Activated CD4-positive, alpha-beta T cell treated with anti-CD3 and anti-CD28 coated beads, Interleukin-2, amount 10 ng/mL, durations not matched to agents 24 days and 14 days (primary cell): ENCODE measurements at regions of chr2 and their contacts with region 1.

Region 1: GRCh38 chr2:64330281-64331113 is 123.5 kb upstream of the LGALSL start:
- DNase-seq: peak; percentile 92
- H3K4me3 Mint-ChIP-seq: peak overlapping the region; percentile 50
- H3K27ac Mint-ChIP-seq: peak overlapping the region; percentile 80
- H3K4me1 Mint-ChIP-seq: peaks cover 58% of the 10 kb centered on the region
- H3K27me3 Mint-ChIP-seq: peaks cover 2% of the 10 kb centered on the region

Region 2: GRCh38 chr2:63977904-63978303 is 352.6 kb before region 1 on chr2:
- intact Hi-C with region 1: loop called (anchors 1 kb)
- DNase-seq: peak; percentile 80
- H3K4me3 Mint-ChIP-seq: peak overlapping the region; percentile 26
- H3K27ac Mint-ChIP-seq: peak overlapping the region; percentile 74
- H3K4me1 Mint-ChIP-seq: peaks cover 23% of the 10 kb centered on the region
- H3K27me3 Mint-ChIP-seq: no peaks in the 10 kb centered on the region

Region 3: DNA sequence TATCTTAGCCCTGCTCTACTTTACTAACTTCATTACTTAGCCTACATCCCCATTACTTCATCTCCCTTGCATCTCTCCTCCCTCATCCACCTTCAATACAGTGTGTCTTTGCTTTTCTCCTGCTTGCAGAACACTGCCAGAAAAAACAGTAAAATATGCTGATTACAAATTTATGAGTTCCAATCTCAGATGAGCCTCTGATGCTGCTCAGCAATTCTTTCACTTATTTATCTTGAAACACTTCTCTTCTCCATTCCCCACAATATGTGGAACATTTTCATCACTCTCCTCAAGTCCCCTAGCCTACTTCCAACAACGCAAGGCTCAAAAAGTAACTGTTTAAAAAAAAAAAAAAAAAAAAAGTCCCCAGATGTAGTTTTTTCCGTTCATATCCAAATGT is 318.4 kb before region 1 on chr2:
- intact Hi-C with region 1: no loop called
- DNase-seq: peak; percentile 40
- H3K4me3 Mint-ChIP-seq: no peak overlapping the region
- H3K27ac Mint-ChIP-seq: peak overlapping the region; percentile 52
- H3K4me1 Mint-ChIP-seq: peaks cover 31% of the 10 kb centered on the region
- H3K27me3 Mint-ChIP-seq: no peaks in the 10 kb centered on the region

Region 4: DNA sequence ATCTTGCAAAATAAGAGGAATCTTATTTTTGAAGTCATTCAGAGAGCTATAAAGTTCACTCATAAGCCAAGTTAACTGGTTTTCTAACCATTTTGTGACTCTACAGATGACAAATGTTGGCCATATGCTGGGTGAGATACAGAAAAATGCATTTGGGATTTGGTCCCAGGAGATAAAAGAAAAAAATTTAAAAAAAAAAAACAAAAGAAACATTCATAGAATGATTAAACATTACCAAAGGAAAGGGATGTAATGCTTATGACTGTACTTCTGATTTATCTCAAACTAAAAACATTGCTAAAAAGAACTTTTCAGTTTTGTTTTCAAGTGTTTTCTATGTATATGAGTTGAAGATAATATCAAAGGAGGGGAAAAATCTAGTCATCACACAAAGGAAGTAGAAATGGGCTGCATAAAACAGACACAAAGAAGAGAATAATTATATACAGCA is 229.3 kb before region 1 on chr2:
- intact Hi-C with region 1: loop called (anchors 1 kb)
- DNase-seq: no peak
- H3K4me3 Mint-ChIP-seq: peak overlapping the region; percentile 18
- H3K27ac Mint-ChIP-seq: peak overlapping the region; percentile 85
- H3K4me1 Mint-ChIP-seq: peaks cover 37% of the 10 kb centered on the region
- H3K27me3 Mint-ChIP-seq: no peaks in the 10 kb centered on the region

Region 5: GRCh38 chr2:64165706-64166105 is 164.8 kb before region 1 on chr2:
- intact Hi-C with region 1: loop called (anchors 1 kb)
- DNase-seq: no peak
- H3K4me3 Mint-ChIP-seq: no peak overlapping the region
- H3K27ac Mint-ChIP-seq: no peak overlapping the region
- H3K4me1 Mint-ChIP-seq: peaks cover 3% of the 10 kb centered on the region
- H3K27me3 Mint-ChIP-seq: no peaks in the 10 kb centered on the region

Region 6: DNA sequence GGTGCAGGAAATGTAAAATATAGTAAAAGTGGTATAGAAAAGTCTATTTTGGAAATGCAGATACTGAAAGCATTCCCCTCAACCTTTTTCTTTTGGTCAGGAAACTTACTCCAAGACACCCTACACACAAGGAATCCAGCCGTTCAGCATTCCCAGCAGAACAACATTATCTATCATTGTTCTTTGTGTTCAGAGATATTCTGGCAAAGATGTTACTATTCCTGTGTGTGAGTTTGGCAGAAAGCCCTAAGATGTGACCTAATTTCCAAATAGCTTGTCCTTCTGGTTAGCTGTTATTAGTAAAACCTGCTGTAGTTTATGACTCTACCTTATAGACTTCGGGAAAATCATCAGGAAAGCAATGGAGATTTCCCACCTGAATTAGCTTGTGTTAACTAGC is 108.1 kb before region 1 on chr2:
- intact Hi-C with region 1: no loop called
- DNase-seq: no peak
- H3K4me3 Mint-ChIP-seq: peak overlapping the region; percentile 63
- H3K27ac Mint-ChIP-seq: peak overlapping the region; percentile 87
- H3K4me1 Mint-ChIP-seq: peaks cover 33% of the 10 kb centered on the region
- H3K27me3 Mint-ChIP-seq: no peaks in the 10 kb centered on the region

Region 7: DNA sequence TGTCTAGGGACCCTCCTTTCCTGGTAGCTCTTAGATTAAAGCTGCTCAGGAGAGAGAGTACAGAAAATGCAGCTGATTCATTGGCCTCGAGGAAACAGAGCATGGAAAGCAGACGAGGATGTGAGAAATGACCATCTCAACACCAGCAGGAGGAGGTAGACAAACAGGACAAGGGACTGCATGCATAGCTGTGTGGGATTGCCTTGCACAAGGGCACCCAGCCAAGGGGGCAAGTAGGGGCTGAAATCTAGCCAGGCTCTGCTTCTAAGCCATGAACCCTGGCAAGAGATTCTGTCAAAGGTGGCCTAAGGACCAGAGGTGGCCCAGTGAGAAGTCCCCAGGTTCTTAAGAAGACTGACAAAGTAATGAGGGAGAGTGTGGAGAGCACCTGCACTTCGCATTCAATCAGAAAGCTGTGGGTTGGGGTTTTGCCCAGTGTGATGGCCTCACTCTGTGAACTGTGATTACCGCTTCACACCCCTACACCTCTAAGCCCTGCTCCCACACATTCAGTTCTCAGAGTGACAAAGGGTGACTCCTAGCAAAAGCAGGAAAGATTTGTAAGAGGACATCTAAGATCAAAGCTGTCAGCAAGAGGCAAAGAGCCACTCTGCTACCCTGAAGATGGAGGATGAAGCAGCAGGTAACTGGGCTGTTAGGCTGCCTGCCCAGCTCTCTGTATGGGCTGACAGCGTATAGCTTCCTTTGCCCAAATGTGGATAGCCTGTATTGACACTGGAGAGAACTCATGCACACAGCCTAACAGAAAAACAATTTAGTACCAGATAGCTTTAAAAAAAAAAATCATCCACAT is 35.0 kb before region 1 on chr2:
- intact Hi-C with region 1: loop called (anchors 1 kb)
- DNase-seq: no peak
- H3K4me3 Mint-ChIP-seq: peak overlapping the region; percentile 33
- H3K27ac Mint-ChIP-seq: peak overlapping the region; percentile 82
- H3K4me1 Mint-ChIP-seq: peaks cover 19% of the 10 kb centered on the region
- H3K27me3 Mint-ChIP-seq: peaks cover 19% of the 10 kb centered on the region

Region 8: DNA sequence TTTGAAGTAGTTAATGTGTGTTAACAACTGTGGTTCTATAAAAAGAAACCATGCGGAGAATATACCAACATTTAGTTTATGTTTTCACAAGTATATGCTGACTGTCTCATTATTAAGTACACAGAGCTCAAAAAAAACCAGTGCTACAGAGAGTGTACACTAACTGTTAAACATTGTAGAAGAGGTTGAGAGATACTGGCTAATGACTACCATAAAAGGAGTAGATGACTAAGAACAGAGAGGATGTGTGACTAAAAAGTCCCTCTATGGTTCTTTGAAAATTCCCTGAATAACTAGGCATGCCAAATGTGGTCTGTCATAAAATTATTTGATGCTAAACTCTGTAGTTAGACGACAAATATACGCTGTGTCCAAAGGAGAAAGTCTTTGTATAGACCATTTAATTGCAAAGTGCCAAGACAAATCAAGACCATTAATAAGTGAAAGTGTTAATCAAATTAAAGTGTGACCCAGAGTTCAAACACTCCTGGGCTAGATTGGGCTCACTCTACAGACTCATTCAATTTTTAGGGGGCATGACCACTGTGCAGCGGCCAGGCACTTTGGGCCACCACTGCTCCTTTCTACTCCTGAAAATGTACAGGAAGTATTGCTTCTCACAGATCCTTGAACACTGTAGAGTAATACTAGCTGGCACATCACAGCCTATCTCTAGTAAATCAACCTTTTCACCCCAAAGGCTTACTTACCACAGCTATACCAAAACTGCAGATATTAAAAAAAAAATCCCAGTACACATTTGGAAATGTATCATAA is 368.4 kb after region 1 on chr2:
- intact Hi-C with region 1: loop called (anchors 5 kb)
- DNase-seq: peak; percentile 64
- H3K4me3 Mint-ChIP-seq: peak overlapping the region; percentile 66
- H3K27ac Mint-ChIP-seq: peak overlapping the region; percentile 90
- H3K4me1 Mint-ChIP-seq: peaks cover 54% of the 10 kb centered on the region
- H3K27me3 Mint-ChIP-seq: no peaks in the 10 kb centered on the region